ENCODE measurements at regions of chr15 and their contacts with region 1.

Region 1: DNA sequence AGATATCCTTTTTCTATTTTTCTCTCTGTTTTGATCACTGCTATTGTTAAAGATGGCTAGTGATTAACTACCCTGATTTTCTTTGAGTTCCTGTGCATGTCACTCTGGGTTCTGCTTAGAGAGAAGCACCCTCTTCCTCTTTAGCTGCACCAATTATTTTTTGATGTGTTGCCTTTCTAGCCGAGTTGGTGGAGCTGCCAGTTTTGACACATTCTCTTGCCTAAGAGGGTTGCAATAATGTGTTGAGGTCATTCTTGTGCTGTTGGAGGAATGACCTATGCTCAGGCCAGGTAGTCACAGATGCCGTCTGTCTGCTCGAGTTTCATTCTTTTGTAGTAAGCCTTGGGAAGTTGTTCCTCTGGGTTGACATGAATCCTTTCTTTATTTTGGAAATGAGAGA is 84.6 kb upstream of the DPH6 start:
- DNase-seq: peak in 1 of 2 donors; percentile 16
- ATAC-seq: peak; percentile 20 to 97 (median 86)
- H3K4me3 ChIP-seq: no peak overlapping the region
- H3K27ac ChIP-seq: peak overlapping the region in 5 of 10 donors; percentile 3 to 48 (median 35)
- H3K4me1 ChIP-seq: peaks cover 0 to 27% (median 8%) of the 10 kb centered on the region in 9 donors
- H3K27me3 ChIP-seq: no peaks in the 10 kb centered on the region
- CTCF ChIP-seq: no peak

Region 2: GRCh38 chr15:35545824-35546510 is 84.6 kb before region 1 on chr15 and contains the start of gene DPH6:
- intact Hi-C with region 1: no loop called
- DNase-seq: peak; percentile 86 to 87
- ATAC-seq: peak; percentile 94 to 96 (median 96)
- H3K4me3 ChIP-seq: peak within 1 kb of the TSS; percentile 12 to 87 (median 70)
- H3K27ac ChIP-seq: peak within 1 kb of the TSS; percentile 96 to 100 (median 98)
- H3K4me1 ChIP-seq: peaks cover 0 to 40% (median 29%) of the 10 kb centered on the region in 9 donors
- H3K27me3 ChIP-seq: no peaks in the 10 kb centered on the region
- CTCF ChIP-seq: peak in 4 of 9 donors; percentile 12 to 37 (median 24)
- total RNA-seq, gene DPH6: 12.2 to 25.8 (median 23.4) TPM

Region 3: GRCh38 chr15:35697549-35698299 is 67.2 kb after region 1 on chr15:
- intact Hi-C with region 1: loop called in 1 of 10 experiments (anchors 10 kb)
- DNase-seq: no peak
- ATAC-seq: peak; percentile 26 to 89 (median 72)
- H3K4me3 ChIP-seq: no peak overlapping the region
- H3K27ac ChIP-seq: peak overlapping the region; percentile 2 to 76 (median 52)
- H3K4me1 ChIP-seq: peaks cover 1 to 55% (median 38%) of the 10 kb centered on the region in 9 donors
- H3K27me3 ChIP-seq: no peaks in the 10 kb centered on the region
- CTCF ChIP-seq: peak in 4 of 9 donors; percentile 18 to 44 (median 33)